Uterus (tissue), 4 donors: ENCODE measurements at regions of chr16 and their contacts with region 1.

Region 1: DNA sequence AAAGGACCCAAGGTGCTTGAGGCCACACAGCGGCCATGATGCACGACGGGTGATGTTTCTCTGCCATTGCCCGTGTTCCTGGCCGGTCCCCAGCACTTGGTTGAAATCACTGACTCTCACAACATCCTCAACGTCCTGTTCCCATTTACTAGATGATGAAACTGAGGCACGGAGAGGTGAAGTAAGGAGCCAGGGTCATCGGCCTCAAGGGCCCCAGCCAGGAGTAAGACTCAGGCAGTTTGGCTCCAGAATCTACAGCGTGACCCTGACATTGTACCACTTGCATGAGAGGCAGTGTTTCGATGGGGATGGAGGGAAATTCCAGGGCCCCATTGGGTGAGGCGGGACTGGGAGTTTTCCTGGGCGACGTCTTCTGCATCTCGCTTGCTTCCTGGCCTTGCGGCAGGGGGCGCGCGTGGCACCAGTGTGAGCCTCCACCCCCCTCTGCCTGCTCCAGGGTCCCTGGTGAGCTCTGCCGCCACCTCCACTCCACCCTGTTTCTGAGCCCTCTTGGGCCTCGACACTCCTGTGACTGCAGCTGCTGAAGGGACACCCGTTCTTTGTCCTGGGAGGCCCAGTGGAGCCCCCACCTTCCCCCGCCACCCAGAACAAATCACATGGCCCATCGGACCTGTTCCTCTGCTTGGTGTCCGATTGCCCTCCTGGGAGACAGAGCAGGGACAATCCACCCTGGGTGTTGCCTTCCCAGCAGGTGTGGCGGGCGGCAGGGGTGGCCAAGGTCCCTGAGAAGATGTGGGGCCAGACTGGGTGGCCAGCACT is 133.0 kb upstream of the GSE1 start:
- DNase-seq: no peak
- H3K4me3 ChIP-seq: no peak overlapping the region
- H3K27ac ChIP-seq: no peak overlapping the region
- H3K4me1 ChIP-seq: peaks cover 0 to 5% of the 10 kb centered on the region in 2 donors
- H3K27me3 ChIP-seq: no peaks in the 10 kb centered on the region
- CTCF ChIP-seq: no peak
- POLR2A ChIP-seq: no peak

Region 2: GRCh38 chr16:85541980-85542900 is 62.1 kb after region 1 on chr16:
- intact Hi-C with region 1: loop called (anchors 10 kb)
- DNase-seq: no peak
- H3K4me3 ChIP-seq: no peak overlapping the region
- H3K27ac ChIP-seq: no peak overlapping the region
- H3K4me1 ChIP-seq: no peaks in the 10 kb centered on the region
- H3K27me3 ChIP-seq: no peaks in the 10 kb centered on the region
- CTCF ChIP-seq: no peak
- POLR2A ChIP-seq: no peak

Region 3: DNA sequence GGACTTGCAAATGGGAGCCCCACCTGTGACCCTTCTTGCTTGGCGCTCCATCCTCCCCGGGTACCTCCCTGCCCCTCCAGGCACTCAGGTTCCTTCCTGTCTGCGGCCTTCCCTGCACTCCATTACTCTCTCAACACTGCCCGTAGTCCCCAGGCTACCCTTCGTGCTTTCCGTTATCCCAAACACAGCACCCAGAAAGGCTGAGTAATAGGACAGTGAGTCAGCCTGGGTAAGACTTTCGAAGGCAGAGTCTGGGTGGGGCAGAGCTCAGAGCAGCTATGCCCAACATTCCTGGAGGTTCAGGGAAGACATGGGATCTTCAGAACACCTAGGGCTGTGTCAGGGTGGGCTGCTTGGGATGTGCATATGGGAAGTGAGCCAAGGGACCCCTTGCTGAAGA is 287.4 kb after region 1 on chr16:
- intact Hi-C with region 1: no loop called
- DNase-seq: no peak
- H3K4me3 ChIP-seq: no peak overlapping the region
- H3K27ac ChIP-seq: no peak overlapping the region
- H3K4me1 ChIP-seq: no peaks in the 10 kb centered on the region
- H3K27me3 ChIP-seq: no peaks in the 10 kb centered on the region
- CTCF ChIP-seq: no peak
- POLR2A ChIP-seq: no peak

Region 4: DNA sequence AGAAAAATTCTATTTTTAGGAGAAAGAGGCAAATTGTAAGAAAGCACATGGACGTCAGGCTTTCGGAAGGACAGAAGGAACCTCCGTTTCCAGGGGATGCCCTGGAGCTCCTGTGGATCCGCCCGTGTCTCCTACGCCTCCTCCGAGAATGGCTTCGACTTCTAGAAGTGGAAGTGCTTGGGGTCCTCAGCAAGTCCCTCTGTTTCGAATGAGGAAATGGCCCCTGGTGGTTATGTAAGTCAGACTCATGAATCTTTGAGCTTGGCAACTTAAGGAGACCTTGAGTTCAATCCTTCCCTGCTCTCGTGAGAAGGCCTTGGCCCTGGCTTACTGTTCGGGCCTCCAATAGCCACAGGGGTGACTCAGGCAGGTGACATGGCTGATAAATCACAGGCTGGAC is 358.2 kb after region 1 on chr16:
- intact Hi-C with region 1: no loop called
- DNase-seq: no peak
- H3K4me3 ChIP-seq: no peak overlapping the region
- H3K27ac ChIP-seq: no peak overlapping the region
- H3K4me1 ChIP-seq: no peaks in the 10 kb centered on the region
- H3K27me3 ChIP-seq: peaks cover 0 to 21% of the 10 kb centered on the region in 2 donors
- CTCF ChIP-seq: no peak
- POLR2A ChIP-seq: no peak